Motor neuron (in vitro differentiated cells): ENCODE measurements at regions of chr1 and their contacts with region 1.

Region 1: DNA sequence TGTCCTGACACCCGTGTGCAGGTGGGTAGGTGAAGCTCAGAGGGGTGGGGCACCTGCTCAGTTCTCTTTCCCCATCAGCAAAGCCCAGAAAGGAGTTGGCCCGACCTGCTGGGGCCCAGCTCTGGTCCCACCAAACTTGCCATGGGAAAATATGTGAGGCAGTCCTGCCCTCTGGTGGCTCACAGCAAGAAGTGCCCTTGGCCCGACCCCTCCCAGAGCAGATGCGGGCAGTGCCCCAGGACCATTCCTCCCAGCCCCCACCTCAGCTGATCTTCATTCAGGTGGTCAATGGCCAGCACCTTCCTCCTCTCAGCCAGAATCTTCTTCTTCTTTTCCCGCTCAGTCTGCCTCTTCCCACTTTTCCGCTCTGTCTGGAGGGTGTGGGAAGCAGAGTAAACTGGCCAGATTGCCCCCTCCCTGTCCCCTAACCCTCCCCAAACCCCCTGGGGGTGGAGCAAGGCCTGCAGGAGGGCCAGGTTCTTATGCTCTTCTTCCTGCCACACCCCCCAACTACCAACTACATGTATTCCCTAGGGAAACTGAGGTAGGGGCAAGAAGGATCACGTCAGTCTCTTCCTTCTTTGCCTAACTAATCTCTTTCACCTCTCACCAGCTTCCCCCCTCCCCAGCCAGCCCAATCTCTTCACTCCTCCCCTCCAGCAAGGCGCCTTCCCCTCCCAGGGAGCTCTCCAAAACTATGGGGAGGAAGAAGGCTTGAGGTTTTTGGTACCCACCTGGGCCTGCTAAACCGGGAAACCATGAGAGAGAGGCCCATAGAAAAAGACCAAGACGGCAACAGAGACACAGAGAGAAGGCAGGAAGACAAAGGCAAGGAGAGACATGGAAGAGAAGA is 15.6 kb downstream of the TNNT2 start:
- ATAC-seq: peak; percentile 63 to 94 (median 74)
- H3K4me3 ChIP-seq: no peak overlapping the region
- H3K27ac ChIP-seq: no peak overlapping the region
- H3K4me1 ChIP-seq: peaks cover 0 to 12% of the 10 kb centered on the region in 2 donors

Region 2: DNA sequence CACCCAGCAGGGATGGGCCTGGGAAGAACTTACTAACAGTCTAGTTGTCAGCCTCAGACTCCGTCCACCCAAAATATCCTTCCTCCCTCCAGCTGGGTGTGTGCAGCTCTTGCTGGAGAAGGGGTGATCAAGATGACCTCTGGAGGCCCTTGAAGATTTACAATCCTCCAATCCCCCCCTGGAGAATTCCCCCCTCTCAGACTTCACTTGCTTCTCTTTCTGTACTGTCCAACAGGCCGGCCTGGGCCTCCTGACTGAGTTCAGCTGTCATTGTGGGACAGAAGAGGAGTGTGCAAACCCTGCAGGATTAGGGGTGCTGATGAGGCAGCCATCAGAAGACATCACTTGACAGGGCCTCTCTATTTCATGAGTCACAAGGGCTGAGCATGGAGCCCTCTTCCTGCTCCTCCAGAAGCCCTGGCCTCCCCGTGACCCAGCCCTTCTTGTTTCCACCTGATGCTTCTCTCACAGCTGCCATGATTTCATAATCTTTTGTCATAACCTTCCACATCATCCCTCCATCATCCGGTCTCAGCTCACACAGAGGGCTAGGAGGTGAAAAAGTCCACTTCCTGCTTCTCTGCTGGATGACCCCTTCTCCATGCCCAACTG is 188.8 kb before region 1 on chr1:
- in situ Hi-C with region 1: no loop called
- ATAC-seq: peak in 4 of 8 experiments; percentile 1 to 25 (median 10)
- H3K4me3 ChIP-seq: no peak overlapping the region
- H3K27ac ChIP-seq: peak overlapping the region in 1 of 2 donors; percentile 31
- H3K4me1 ChIP-seq: peaks cover 18 to 30% of the 10 kb centered on the region in 2 donors

Region 3: GRCh38 chr1:201254625-201255506 is 107.0 kb before region 1 on chr1:
- in situ Hi-C with region 1: loop called in 5 of 9 experiments (anchors 10 to 25 kb)
- ATAC-seq: peak; percentile 53 to 93 (median 88)
- H3K4me3 ChIP-seq: no peak overlapping the region
- H3K27ac ChIP-seq: no peak overlapping the region
- H3K4me1 ChIP-seq: no peaks in the 10 kb centered on the region

Region 4: DNA sequence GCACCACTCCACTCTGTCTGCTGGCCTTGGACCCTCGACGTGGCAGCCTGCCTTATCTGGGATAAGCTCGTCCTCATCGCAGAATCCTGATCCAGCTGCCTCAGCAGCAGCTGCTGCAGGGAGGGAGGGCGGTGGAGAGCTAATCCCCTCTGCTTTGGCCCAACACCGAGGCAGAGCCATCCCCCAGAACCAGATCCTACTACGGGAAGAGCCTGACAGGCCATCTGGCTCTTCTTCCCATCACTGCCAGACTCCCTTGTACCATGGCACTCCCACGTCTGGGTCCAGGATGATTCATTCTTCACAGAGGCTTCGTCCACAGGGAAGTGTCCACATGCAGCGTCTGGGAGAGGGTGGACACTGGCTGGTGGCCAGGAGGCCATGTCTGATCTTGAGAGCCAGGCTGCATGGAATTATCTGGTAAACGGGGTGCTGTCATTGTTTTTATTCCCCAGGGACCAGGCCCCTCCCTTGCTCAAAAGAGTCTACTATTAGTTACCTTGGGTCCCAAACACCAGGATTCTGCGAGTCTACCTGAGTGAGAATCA is 93.2 kb before region 1 on chr1:
- in situ Hi-C with region 1: loop called in 5 of 9 experiments (anchors 10 to 25 kb)
- ATAC-seq: peak; percentile 31 to 95 (median 55)
- H3K4me3 ChIP-seq: no peak overlapping the region
- H3K27ac ChIP-seq: no peak overlapping the region
- H3K4me1 ChIP-seq: peaks cover 4 to 9% of the 10 kb centered on the region in 2 donors